Posterior cingulate gyrus (tissue), 11 donors: ENCODE measurements at regions of chr14 and their contacts with region 1.

Region 1: DNA sequence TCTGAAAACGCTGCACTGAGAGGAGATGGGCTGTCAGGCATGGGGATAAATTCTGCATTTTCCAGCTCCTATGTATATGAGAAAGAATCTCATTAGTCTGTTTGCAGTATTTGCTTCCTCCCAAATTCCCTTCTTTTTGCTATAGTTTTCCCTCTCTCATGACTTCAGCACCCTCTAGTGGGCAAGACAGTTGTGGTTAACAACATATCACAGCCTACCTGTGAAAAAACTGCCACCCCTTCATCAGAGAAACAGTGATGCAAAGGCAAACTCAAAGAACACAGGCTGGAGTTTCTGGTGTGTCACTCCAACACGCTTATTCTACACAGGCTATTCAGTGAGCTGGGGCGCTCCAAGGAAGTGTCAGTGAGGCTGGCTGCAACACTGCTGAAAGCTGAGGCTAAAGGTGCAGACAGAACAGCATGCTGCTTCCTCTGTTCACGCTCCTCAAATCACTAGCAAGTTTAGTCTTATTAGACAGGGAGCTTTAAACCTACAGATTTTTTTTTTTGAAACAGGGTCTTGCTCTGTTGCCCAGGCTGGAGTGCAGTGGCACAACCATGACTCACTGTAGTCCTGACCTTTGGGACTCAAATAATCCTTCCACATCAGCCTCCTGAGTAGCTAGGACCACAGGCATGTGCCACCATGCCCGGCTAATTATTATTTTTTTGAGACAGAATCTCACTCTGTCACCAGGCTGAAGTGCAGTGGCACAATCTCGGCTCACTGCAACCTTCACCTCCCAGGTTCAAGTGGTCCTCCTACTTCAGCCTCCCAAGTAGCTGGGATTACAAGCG is 19.3 kb downstream of the ZC2HC1C start:
- DNase-seq: peak in 4 of 10 donors; percentile 17 to 55 (median 34)

Region 2: DNA sequence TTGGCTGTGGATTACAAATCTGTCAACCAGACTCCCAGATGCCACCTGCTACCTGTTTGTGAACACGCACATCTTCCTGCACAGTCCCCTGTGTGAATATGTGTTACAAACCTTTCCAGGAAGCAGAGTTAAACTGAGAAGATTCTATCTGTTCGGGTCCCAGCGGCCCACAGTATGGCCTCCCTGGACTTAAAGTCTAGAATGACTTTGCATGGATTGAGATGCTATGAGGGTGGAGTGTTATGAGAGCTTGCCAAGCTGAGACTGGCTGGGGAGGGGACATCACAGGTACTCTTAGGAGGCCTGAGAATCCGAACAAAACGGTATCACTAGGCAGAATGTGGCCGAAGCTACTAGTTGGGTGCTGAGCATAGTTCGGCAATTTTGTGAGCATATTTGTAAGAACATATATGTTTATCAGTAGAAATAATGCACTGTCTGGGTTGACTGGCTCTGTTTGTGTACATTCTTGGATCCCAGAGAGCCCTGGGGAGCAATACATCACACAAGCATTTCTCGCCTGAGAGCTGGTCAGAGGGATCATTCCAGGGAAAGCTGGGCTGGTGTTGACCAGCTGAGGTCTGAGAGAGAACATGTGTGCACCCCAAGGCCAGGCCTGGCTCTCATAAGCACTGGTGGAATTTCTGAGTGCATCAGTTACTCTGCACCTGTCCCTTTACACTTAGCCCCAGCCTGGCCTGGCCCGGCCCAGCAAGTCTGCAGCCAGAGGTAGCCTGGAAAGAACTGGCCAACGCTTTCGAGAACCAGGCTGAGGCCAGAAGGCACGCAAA is 447.0 kb before region 1 on chr14:
- intact Hi-C with region 1: no loop called
- DNase-seq: peak in 1 of 10 donors; percentile 64

Region 3: GRCh38 chr14:74860906-74861733 is 227.7 kb before region 1 on chr14:
- intact Hi-C with region 1: loop called (anchors 5 kb)
- DNase-seq: peak; percentile 72 to 98 (median 91)

Region 4: GRCh38 chr14:74913986-74914573 is 174.7 kb before region 1 on chr14:
- intact Hi-C with region 1: loop called (anchors 2 kb)
- DNase-seq: peak in 8 of 10 donors; percentile 51 to 95 (median 64)

Region 5: DNA sequence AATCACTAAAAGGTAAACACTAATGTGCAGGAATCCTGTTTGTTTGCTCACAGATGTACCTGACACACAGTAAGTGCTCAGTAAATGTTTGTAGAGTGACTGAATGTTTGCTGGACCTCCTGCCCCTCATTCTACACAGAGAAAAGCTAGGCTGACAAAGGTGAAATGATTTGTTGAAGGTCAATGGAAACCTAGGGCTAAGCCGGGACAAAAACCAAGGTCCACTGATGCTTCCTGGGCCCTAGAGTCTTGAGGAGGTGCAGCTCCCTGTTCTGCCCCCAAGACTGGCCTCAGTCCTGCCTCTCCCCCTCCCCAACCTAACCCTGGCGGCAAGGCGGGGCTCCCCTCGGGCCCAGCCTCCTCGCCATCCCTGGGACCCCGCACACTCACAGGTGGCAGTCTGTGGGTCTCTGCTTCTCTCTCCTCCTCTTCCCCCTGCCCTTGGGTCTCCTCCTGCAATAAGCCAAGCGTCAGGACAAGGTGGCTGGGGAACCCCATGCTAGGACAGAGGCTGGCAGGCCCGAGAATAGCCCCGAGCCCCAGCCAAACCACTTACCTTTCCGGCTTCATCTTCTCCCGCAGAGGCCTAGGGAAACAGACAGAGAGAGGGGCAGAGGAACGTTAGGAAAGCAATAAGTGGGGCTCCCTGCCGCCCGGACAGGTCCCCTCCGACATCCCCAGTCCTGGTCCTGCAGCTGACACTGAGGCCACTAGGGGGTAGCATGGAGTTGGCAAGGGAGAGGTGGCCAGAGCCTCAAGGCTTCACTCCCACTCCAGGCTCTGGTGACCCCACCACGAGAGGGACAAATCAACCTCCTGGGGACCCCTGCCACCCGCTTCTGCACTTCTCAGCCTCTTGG is 142.7 kb before region 1 on chr14:
- intact Hi-C with region 1: loop called (anchors 1 kb)
- DNase-seq: peak; percentile 44 to 96 (median 83)